CD4-positive, alpha-beta memory T cell (primary cell): ENCODE measurements at regions of chr12 and their contacts with region 1.

Region 1: DNA sequence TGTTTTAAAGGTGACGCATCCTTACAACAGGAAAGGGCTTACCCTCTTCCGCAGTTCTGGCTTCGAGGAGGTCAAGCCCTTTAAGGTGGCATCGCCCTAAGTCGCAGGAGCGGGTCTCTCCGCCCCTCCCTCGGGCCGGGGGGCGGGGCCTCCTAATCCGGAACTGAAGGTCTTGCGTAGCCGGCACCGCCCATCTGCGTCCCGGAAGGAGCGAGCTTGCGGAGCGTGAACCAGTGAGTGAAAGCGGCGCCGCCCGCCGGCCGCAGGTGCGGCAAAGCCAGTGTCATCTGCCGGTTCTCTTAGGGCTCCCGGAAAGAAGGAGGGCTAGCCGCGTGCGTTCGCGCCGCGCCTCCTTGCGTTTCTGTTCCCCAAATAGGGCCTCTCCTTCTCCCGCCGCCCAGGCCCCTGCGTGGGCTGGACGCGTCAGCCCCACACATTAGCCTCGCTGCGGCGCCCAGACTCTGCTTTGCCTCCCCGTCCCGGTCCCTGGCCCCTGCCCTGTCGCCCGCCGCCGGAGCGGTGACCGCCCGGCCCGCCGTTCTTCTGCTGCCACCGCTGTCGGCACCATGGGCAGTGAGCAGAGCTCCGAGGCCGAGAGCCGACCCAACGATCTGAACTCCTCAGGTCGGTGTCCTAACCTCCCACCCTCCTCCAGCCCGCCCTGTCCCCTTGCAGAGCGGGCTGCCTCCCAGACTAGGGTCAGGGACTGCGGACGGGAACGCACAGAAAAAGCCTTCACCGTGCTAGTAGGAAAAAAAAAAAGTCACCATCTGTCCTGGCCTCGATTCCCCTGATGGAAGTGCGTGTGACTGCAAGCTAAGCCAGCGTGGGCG is at the start of gene BORCS5:
- DNase-seq: peak; percentile 98 to 99 (median 99)
- H3K4me3 ChIP-seq: peak within 1 kb of the TSS; percentile 88 to 90
- H3K4me3 Mint-ChIP-seq: peak within 1 kb of the TSS; percentile 90 to 96 (median 95)
- H3K27ac ChIP-seq: peak within 1 kb of the TSS; percentile 99
- H3K27ac Mint-ChIP-seq: peak within 1 kb of the TSS; percentile 89 to 99 (median 98)
- H3K4me1 ChIP-seq: peaks cover 44% of the 10 kb centered on the region
- H3K4me1 Mint-ChIP-seq: peaks cover 29 to 76% (median 42%) of the 10 kb centered on the region in 4 donors
- H3K27me3 ChIP-seq: no peaks in the 10 kb centered on the region
- H3K27me3 Mint-ChIP-seq: no peaks in the 10 kb centered on the region
- total RNA-seq, gene BORCS5: 21.3 to 26.8 TPM

Region 2: DNA sequence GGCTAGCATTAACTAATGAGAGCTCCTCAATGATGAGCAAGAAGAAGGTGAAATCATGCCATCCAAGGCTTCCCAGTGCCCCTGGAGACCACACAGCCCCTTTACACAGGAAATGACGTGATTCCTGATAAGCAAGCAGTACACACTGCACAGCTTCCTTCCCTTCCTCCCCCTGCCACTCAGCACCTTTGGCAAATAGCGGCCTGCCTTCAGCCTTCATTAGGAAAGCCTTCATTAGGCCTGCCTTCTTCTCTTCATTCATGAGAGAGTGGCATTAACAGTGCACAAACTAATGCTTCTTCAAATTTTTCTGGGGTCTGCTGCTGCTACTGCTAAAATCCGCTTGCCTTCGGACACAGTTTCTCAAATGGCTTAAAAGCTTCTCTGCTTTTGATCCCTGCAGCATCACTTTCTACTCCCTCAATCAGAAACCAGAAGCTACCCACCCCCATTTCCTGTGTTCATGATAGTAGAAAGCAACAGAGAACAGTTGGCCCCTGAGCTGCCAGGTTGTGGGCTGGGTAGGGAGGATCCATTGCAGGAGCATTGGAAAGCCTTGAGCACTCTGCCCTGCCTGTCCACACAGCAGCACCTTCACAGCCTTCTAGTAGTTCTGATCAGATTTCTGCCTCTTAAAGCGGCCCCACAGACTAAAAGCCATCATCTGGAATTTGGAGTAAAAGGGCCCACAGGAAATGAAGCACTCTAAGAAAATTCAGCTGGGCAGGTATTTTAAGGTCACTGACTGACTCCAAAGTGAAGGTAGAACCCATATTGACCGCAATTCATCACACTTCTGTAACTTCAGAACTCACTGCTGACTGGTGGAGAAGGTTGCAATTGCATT is 811.4 kb before region 1 on chr12:
- CTCF ChIA-PET with region 1: no interaction called
- POLR2A ChIA-PET with region 1: interaction called, 12 read pairs
- intact Hi-C with region 1: no loop called
- DNase-seq: peak; percentile 78 to 82 (median 80)
- H3K4me3 ChIP-seq: peak overlapping the region in 1 of 2 donors; percentile 14
- H3K4me3 Mint-ChIP-seq: peak overlapping the region; percentile 71 to 88 (median 78)
- H3K27ac ChIP-seq: peak overlapping the region; percentile 57
- H3K27ac Mint-ChIP-seq: peak overlapping the region; percentile 94 to 99 (median 96)
- H3K4me1 ChIP-seq: peaks cover 55% of the 10 kb centered on the region
- H3K4me1 Mint-ChIP-seq: peaks cover 32 to 68% (median 51%) of the 10 kb centered on the region in 4 donors
- H3K27me3 ChIP-seq: no peaks in the 10 kb centered on the region
- H3K27me3 Mint-ChIP-seq: no peaks in the 10 kb centered on the region

Region 3: DNA sequence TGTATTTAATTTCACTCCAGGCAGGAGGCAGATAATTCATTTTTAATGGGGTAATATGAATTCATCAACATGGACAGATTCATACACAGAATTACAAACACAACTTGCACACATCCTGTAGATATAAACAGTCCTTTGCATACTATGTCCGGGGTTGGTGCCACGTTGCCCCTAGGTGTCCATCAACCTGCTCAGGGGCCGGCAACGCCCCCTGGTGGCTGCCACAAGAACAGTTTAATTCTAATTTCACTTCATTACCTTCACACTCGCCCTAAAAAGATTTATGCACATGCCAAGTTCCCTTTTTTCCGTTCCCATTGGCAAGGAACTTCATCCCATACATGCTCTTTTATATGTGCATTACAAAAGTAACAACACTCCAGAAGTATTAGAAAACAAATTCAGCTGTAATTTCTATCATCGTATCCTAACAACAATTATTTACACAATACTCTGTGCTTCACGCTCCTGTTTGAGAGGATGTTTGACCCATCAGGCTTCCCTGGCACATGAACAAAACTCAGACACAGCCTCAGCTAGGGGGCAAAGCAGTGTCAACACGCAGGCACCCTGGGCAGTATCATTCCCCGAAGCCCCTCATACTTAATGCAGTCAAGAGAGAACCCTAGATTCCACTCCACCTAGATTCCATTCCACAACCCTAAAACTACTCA is 22.6 kb before region 1 on chr12:
- CTCF ChIA-PET with region 1: interaction called, 33 read pairs
- POLR2A ChIA-PET with region 1: interaction called, 13 read pairs
- intact Hi-C with region 1: loop called (anchors 2 kb)
- DNase-seq: peak; percentile 48 to 61 (median 55)
- H3K4me3 ChIP-seq: no peak overlapping the region
- H3K4me3 Mint-ChIP-seq: peak overlapping the region in 3 of 8 donors; percentile 26 to 38 (median 29)
- H3K27ac ChIP-seq: no peak overlapping the region
- H3K27ac Mint-ChIP-seq: peak overlapping the region in 3 of 7 donors; percentile 32 to 63 (median 45)
- H3K4me1 ChIP-seq: peaks cover 9% of the 10 kb centered on the region
- H3K4me1 Mint-ChIP-seq: peaks cover 8 to 24% (median 11%) of the 10 kb centered on the region in 4 donors
- H3K27me3 ChIP-seq: no peaks in the 10 kb centered on the region
- H3K27me3 Mint-ChIP-seq: no peaks in the 10 kb centered on the region

Region 4: DNA sequence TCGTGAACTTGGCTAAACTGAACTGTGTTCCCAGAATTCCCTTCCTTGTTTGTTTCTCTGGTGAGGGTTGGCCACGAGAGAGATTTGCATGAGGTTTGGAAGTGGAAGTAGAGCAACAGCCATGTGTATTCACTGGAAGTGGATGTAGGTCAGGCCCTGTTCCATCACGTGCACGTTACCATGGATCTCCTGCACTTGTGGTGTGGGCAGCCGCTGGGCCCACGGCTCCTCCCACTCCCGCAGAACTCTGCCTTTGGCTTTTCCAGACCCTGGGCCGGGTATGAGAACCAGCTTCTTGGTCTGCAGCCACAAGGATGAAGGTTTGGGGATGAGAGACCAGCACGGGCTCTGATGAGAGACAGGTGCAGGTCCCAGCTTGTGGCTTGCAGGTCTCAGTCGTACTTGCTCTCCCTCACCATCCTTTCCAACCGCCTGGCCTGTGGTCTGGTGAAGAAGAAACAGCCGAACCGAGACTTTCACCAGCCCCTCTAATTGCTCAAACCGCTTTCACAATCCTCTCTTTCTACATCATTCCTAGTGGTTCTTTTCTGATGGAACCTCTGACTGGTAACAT is 110.7 kb after region 1 on chr12:
- CTCF ChIA-PET with region 1: interaction called, 3 read pairs
- POLR2A ChIA-PET with region 1: interaction called, 40 read pairs
- intact Hi-C with region 1: no loop called
- DNase-seq: peak; percentile 76 to 88 (median 85)
- H3K4me3 ChIP-seq: peak overlapping the region in 1 of 2 donors; percentile 12
- H3K4me3 Mint-ChIP-seq: peak overlapping the region; percentile 52 to 83 (median 62)
- H3K27ac ChIP-seq: peak overlapping the region; percentile 82
- H3K27ac Mint-ChIP-seq: peak overlapping the region; percentile 98 to 100 (median 99)
- H3K4me1 ChIP-seq: peaks cover 78% of the 10 kb centered on the region
- H3K4me1 Mint-ChIP-seq: peaks cover 55 to 90% (median 76%) of the 10 kb centered on the region in 4 donors
- H3K27me3 ChIP-seq: no peaks in the 10 kb centered on the region
- H3K27me3 Mint-ChIP-seq: no peaks in the 10 kb centered on the region

Region 5: GRCh38 chr12:12562585-12563261 is 205.6 kb after region 1 on chr12 and contains the start of gene DUSP16:
- CTCF ChIA-PET with region 1: interaction called, 4 read pairs
- POLR2A ChIA-PET with region 1: interaction called, 28 read pairs
- intact Hi-C with region 1: loop called (anchors 1 kb)
- DNase-seq: peak; percentile 90 to 93 (median 91)
- H3K4me3 ChIP-seq: peak within 1 kb of the TSS; percentile 73 to 80
- H3K4me3 Mint-ChIP-seq: peak within 1 kb of the TSS; percentile 92 to 95 (median 92)
- H3K27ac ChIP-seq: peak within 1 kb of the TSS; percentile 99
- H3K27ac Mint-ChIP-seq: peak within 1 kb of the TSS; percentile 95 to 99 (median 99)
- H3K4me1 ChIP-seq: peaks cover 43% of the 10 kb centered on the region
- H3K4me1 Mint-ChIP-seq: peaks cover 25 to 51% (median 37%) of the 10 kb centered on the region in 4 donors
- H3K27me3 ChIP-seq: no peaks in the 10 kb centered on the region
- H3K27me3 Mint-ChIP-seq: no peaks in the 10 kb centered on the region
- total RNA-seq, gene DUSP16: 122 to 125 TPM

Region 6: GRCh38 chr12:12704593-12705230 is 347.6 kb after region 1 on chr12:
- CTCF ChIA-PET with region 1: no interaction called
- POLR2A ChIA-PET with region 1: interaction called, 29 read pairs
- intact Hi-C with region 1: no loop called
- DNase-seq: peak in 4 of 5 donors; percentile 36 to 58 (median 48)
- H3K4me3 ChIP-seq: no peak overlapping the region
- H3K4me3 Mint-ChIP-seq: peak overlapping the region in 6 of 8 donors; percentile 2 to 84 (median 36)
- H3K27ac ChIP-seq: no peak overlapping the region
- H3K27ac Mint-ChIP-seq: peak overlapping the region in 5 of 7 donors; percentile 50 to 88 (median 73)
- H3K4me1 ChIP-seq: peaks cover 37% of the 10 kb centered on the region
- H3K4me1 Mint-ChIP-seq: peaks cover 14 to 32% (median 20%) of the 10 kb centered on the region in 4 donors
- H3K27me3 ChIP-seq: no peaks in the 10 kb centered on the region
- H3K27me3 Mint-ChIP-seq: no peaks in the 10 kb centered on the region

Region 7: GRCh38 chr12:12803186-12803585 is 446.1 kb after region 1 on chr12:
- CTCF ChIA-PET with region 1: no interaction called
- POLR2A ChIA-PET with region 1: interaction called, 5 read pairs
- intact Hi-C with region 1: loop called (anchors 10 kb)
- DNase-seq: peak; percentile 3 to 74 (median 15)
- H3K4me3 ChIP-seq: no peak overlapping the region
- H3K4me3 Mint-ChIP-seq: peak overlapping the region in 6 of 8 donors; percentile 11 to 72 (median 32)
- H3K27ac ChIP-seq: no peak overlapping the region
- H3K27ac Mint-ChIP-seq: peak overlapping the region; percentile 57 to 97 (median 87)
- H3K4me1 ChIP-seq: peaks cover 42% of the 10 kb centered on the region
- H3K4me1 Mint-ChIP-seq: peaks cover 23 to 59% (median 44%) of the 10 kb centered on the region in 4 donors
- H3K27me3 ChIP-seq: no peaks in the 10 kb centered on the region
- H3K27me3 Mint-ChIP-seq: no peaks in the 10 kb centered on the region